ENCODE measurements at regions of chr13 and their contacts with region 1.

Region 1: DNA sequence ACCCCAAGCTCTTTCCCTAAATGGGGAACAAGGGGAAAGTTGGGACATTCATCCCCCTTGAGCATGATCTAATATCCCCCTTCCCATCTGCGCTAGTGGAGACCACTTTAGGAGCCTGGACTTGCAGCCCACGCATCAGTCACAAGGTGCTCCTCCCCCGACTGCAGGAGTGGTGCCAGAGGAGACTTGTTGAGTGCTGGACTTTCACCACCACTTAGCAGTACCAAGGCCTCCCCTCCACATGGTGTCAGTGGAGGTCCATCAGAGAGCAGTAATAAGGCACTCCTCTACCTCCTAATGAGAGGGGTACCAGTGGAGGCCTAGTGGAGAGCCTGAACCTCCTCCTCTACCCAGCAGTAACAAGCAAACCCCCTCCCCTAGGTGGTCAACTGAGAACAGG is 22.5 kb downstream of the CAB39L start:
- DNase-seq: peak in 1 of 2 experiments; percentile 29
- ATAC-seq: peak in 1 of 2 experiments; percentile 79; a peak in 3 of 6 replicates
- H3K4me3 ChIP-seq: no peak overlapping the region
- H3K27ac ChIP-seq: no peak overlapping the region
- H3K4me1 ChIP-seq: no peaks in the 10 kb centered on the region
- CTCF ChIP-seq: no peak
- EP300 ChIP-seq: no peak
- POLR2A ChIP-seq: no peak
- RAD21 ChIP-seq: peak in 1 of 2 experiments; percentile 39; a peak in 1 of 5 replicates

Region 2: GRCh38 chr13:49342454-49342853 is 78.9 kb before region 1 on chr13:
- CTCF ChIA-PET with region 1: no interaction called
- POLR2A ChIA-PET with region 1: no interaction called
- DNase-seq: no peak
- ATAC-seq: no peak
- H3K4me3 ChIP-seq: no peak overlapping the region
- H3K27ac ChIP-seq: no peak overlapping the region
- H3K4me1 ChIP-seq: no peaks in the 10 kb centered on the region
- CTCF ChIP-seq: no peak
- EP300 ChIP-seq: no peak
- POLR2A ChIP-seq: no peak
- RAD21 ChIP-seq: no peak

Region 3: GRCh38 chr13:49436890-49437289 is 15.5 kb after region 1 on chr13:
- CTCF ChIA-PET with region 1: interaction called, 11 read pairs
- POLR2A ChIA-PET with region 1: no interaction called
- DNase-seq: peak in 1 of 2 experiments; percentile 34
- ATAC-seq: 0 out of 6 replicates have a peak, but pooled peaks of 1 of the 2 experiments have one; percentile 34
- H3K4me3 ChIP-seq: no peak overlapping the region
- H3K27ac ChIP-seq: no peak overlapping the region
- H3K4me1 ChIP-seq: no peaks in the 10 kb centered on the region
- CTCF ChIP-seq: peak; percentile 22; the same call in 1 of the 3 replicates
- EP300 ChIP-seq: no peak
- POLR2A ChIP-seq: no peak
- RAD21 ChIP-seq: peak in 1 of 2 experiments; percentile 44; a peak in 2 of 5 replicates